ENCODE measurements at regions of chr1 and their contacts with region 1.

Region 1: GRCh38 chr1:156385534-156386031 is 16.6 kb downstream of the RHBG start:
- DNase-seq: peak; percentile 65 to 84
- H3K4me3 ChIP-seq: no peak overlapping the region
- H3K27ac ChIP-seq: no peak overlapping the region
- H3K4me1 ChIP-seq: peaks cover 0 to 11% (median 8%) of the 10 kb centered on the region in 4 donors
- H3K27me3 ChIP-seq: peaks cover 14 to 49% (median 42%) of the 10 kb centered on the region in 3 donors
- CTCF ChIP-seq: peak in 6 of 7 experiments; percentile 39 to 94 (median 90)
- EP300 ChIP-seq: no peak
- POLR2A ChIP-seq: no peak

Region 2: DNA sequence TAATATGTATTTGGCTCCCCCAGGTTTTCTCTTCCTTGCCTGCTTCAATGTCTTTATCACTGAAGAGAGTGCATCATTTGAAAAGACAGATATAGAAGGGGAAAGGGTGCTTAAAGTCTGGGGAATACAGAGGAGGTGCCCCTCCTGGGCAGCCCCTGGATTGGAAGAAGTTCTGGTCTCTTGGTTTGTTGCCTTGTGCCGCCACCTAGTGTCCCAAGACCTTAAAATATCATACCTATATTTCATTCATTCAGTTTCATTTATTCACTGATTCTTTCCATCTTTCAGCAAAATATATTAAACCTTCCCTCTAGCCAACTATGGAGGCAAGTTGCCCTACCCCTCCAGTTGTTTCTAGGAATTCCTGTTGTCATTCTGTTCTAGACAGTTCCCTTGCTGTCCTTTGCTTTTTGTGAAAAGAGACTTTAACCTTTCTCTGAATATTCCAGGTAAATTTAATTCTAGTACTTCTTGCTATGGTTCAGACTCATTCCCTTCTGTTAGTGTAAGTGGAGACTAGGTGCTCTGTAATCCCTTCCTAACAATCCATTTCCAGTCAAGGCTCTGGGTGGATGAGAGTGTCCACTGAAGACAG is 58.9 kb after region 1 on chr1:
- intact Hi-C with region 1: loop called (anchors 5 kb)
- DNase-seq: peak in 1 of 2 donors; percentile 43
- H3K4me3 ChIP-seq: no peak overlapping the region
- H3K27ac ChIP-seq: no peak overlapping the region
- H3K4me1 ChIP-seq: peaks cover 3 to 8% (median 6%) of the 10 kb centered on the region in 4 donors
- H3K27me3 ChIP-seq: peaks cover 6 to 77% (median 50%) of the 10 kb centered on the region in 3 donors
- CTCF ChIP-seq: peak in 1 of 7 experiments; percentile 19
- EP300 ChIP-seq: no peak
- POLR2A ChIP-seq: no peak

Measured in stomach (tissue), 19 donors.